AG04450 (cell line): ENCODE measurements at regions of chr14 and their contacts with region 1.

Region 1: GRCh38 chr14:78933948-78934524 is 763.9 kb downstream of the NRXN3 start:
- DNase-seq: peak; percentile 18
- H3K4me3 ChIP-seq: no peak overlapping the region
- H3K27ac ChIP-seq: no peak overlapping the region
- H3K27me3 ChIP-seq: no peaks in the 10 kb centered on the region
- CTCF ChIP-seq: peak; percentile 59

Region 2: DNA sequence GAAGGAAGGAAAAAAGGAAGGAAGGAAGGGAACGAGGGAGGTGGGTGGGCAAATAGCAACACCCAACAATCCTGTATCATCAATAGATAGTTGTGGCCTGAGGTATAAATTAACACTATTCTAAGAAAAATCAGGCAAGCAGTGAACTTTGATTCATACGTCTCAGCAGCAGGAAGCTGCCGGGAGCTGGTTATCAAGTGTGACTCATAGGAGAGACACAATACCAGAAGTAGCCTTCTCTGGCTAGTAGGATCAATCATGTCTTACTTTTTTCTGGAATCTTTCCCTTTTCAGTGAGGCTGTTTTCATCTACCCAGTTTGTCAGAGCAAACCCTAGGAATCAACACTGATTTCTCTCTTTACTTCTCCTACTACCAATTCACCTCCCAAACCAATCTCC is 16.6 kb after region 1 on chr14:
- CTCF ChIA-PET with region 1: interaction called, 24 read pairs
- POLR2A ChIA-PET with region 1: no interaction called
- DNase-seq: no peak
- H3K4me3 ChIP-seq: no peak overlapping the region
- H3K27ac ChIP-seq: no peak overlapping the region
- H3K27me3 ChIP-seq: peaks cover 3% of the 10 kb centered on the region
- CTCF ChIP-seq: no peak

Region 3: DNA sequence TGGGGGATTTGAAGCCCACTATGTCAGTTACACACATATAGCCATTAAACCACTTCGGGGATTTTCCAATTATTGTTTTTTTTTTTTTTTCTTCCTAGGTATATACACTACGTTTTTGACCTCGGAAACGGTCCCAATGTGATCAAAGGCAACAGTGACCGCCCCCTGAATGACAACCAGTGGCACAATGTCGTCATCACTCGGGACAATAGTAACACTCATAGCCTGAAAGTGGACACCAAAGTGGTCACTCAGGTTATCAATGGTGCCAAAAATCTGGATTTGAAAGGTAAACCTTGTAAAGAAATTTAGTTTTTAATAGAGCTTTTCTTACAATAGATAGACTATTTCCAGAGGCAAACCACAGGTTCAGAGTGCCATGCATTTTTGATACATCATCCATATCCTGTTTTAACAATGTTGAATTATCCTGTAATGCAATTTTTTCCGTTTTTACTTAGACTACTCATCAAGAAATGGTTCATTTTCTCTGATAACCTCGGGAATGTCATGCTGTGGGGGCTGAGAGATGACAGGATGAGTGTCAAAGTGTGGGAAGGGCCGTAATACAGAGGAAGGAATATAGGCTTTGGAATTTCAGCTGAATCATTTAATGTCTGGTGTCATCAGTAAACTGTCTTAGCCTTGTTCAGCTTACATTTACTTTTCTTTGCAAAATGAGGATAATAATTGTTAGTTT is 33.2 kb after region 1 on chr14:
- CTCF ChIA-PET with region 1: interaction called, 10 read pairs
- POLR2A ChIA-PET with region 1: no interaction called
- DNase-seq: no peak
- H3K4me3 ChIP-seq: no peak overlapping the region
- H3K27ac ChIP-seq: no peak overlapping the region
- H3K27me3 ChIP-seq: no peaks in the 10 kb centered on the region
- CTCF ChIP-seq: no peak

Region 4: DNA sequence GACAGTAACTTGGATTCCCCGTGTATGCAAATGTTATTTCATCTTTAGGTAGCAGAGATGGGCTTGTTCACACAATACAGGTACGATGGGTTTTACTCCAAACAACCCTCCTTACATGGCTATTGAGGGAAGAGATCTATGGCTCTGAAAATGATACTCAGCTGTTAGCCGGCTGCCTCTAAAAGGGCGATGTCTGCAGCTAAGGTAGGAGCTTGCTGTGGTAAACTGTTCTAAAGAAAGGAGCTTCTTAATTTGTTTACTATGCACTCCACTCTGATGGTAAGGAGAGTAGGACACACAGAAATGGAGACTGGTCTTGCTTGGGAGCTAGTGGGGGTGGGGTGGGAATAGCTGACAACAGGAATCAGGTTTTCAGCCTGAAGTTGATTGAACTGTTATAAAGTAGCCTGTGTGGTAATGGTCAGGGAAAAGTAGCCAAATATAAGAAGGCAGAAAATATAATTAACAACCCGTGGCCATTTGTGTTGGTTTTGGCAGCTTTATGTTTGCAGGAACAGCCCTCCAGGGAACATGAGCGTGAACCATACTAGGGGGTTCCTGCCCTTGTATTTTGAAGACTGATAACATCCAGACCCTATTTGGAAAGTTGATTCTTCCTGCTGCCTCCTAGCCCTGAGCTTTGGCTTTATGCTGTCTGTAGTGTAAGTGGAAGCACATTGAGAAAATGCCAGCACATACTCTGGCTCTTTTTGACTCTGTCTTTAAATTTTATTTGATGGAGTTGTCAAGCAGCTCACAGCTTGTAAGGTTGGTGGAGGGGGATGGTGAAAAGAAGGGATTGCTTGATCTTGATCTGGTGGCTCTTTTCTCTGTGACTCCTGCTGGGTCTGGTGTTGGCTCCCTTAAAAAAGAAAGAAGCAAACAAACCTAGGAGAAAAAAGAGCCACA is 347.5 kb after region 1 on chr14:
- CTCF ChIA-PET with region 1: interaction called, 11 read pairs
- POLR2A ChIA-PET with region 1: no interaction called
- DNase-seq: no peak
- H3K4me3 ChIP-seq: peak overlapping the region; percentile 5
- H3K27ac ChIP-seq: no peak overlapping the region
- H3K27me3 ChIP-seq: peaks cover 32% of the 10 kb centered on the region
- CTCF ChIP-seq: no peak